ENCODE measurements at regions of chr16 and their contacts with region 1.

Region 1: GRCh38 chr16:24146523-24146922 is 109.6 kb upstream of the CACNG3 start:
- DNase-seq: peak in 1 of 5 donors; percentile 26
- ATAC-seq: peak; percentile 64 to 79 (median 68)
- H3K4me3 ChIP-seq: no peak overlapping the region
- H3K27ac ChIP-seq: peak overlapping the region in 1 of 12 donors; percentile 18
- H3K4me1 ChIP-seq: peaks cover 0 to 11% (median 0%) of the 10 kb centered on the region in 12 donors
- H3K27me3 ChIP-seq: peaks cover 0 to 5% (median 0%) of the 10 kb centered on the region in 9 donors
- CTCF ChIP-seq: no peak
- POLR2A ChIP-seq: no peak

Region 2: DNA sequence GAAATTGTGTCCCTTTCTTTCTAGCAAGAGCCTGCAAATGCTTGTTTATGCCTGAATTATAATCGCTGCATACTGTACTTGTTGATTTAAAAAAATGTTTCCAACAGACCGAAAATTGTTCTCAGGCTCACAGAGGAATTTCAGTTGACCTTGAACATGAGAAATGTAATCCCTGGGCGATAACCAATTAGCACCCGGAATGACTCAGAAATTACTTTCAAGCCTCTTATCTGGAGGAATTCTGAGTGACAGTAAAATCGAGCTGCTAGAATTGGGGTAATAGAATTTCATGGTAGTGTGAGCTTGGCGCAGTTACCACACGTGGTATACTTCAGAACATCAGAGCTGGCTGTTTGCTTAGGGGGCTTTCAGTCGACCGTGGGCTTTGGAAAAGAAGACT is 29.5 kb before region 1 on chr16:
- intact Hi-C with region 1: no loop called
- DNase-seq: no peak
- ATAC-seq: peak in 3 of 4 donors; percentile 37 to 53 (median 44)
- H3K4me3 ChIP-seq: no peak overlapping the region
- H3K27ac ChIP-seq: peak overlapping the region in 6 of 12 donors; percentile 27 to 70 (median 57)
- H3K4me1 ChIP-seq: peaks cover 0 to 28% (median 5%) of the 10 kb centered on the region in 12 donors
- H3K27me3 ChIP-seq: no peaks in the 10 kb centered on the region
- CTCF ChIP-seq: no peak
- POLR2A ChIP-seq: no peak

Region 3: DNA sequence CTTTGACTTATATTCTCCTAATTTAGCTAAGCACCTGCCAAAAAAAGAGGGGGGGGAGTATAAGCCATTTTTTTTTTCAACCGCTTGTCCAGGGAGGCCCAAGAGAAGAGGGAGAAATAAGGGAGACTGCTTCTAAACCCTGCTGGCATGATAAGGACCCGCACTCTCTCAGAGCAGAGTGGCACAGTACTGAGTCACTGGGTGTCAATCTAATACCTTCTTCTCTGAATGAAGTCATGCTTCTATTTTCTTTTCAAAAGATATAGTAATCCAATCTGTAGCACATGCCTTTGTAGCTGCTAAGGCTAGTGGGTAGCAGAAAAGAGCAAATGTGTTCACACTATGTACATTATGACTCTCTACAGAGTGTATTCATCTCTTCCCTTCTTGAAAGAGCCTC is 74.7 kb after region 1 on chr16:
- intact Hi-C with region 1: loop called in 1 of 10 experiments (anchors 10 kb)
- DNase-seq: no peak
- ATAC-seq: peak in 3 of 4 donors; percentile 65 to 80 (median 76)
- H3K4me3 ChIP-seq: no peak overlapping the region
- H3K27ac ChIP-seq: no peak overlapping the region
- H3K4me1 ChIP-seq: no peaks in the 10 kb centered on the region
- H3K27me3 ChIP-seq: no peaks in the 10 kb centered on the region
- CTCF ChIP-seq: no peak
- POLR2A ChIP-seq: no peak